ENCODE measurements at regions of chr12 and their contacts with region 1.

Region 1: DNA sequence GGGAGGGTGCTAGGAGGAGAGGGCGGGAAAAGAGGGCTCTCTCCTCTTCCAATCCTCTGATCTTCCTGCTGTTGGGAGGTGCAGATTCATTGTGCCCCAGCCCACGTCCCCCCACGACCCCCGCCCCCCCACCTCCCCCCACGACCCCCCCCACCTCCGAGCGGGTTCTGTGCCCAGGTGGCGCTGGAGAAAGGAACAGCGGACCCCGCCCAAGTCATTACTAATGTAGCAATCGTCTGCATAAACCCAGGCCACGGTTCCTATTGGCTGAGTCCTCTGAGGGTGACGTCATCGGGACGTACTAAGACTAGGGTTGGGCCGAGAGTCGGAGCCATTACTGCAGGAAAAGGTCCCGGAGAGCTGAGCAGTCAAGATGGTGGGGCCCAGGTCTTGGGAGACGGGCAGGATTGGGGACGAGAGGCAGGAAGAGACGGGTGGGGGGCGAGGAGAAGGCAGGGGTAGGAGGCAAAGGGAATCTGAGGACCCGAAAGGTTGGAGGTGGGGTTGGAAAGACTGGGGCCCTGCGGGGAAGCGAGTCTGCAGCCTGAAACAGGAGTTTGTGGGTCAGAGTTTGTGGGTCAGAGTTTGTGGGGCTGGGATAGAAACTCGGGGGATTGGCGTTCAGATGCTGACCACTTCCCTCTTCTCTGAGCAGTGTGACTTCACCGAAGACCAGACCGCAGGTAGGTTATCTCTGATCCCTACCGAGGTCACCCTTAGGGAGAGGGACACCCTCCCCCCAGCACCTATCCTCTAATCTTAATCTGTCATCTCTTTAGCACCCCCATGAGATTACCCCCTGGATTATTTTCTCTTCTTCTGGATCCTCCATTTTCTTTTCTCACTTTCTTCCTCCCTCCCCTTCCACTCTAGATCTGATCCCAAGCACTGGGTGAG is at the start of gene MYL6:
- DNase-seq: peak; percentile 97
- ATAC-seq: peak; percentile 90
- total RNA-seq, gene MYL6: 513 TPM

Region 2: GRCh38 chr12:56117778-56118687 is 40.2 kb before region 1 on chr12 and contains the start of gene ZC3H10:
- intact Hi-C with region 1: loop called (anchors 5 kb)
- DNase-seq: peak; percentile 98
- ATAC-seq: peak; percentile 84
- total RNA-seq, gene ZC3H10: 5.8 TPM

Region 3: DNA sequence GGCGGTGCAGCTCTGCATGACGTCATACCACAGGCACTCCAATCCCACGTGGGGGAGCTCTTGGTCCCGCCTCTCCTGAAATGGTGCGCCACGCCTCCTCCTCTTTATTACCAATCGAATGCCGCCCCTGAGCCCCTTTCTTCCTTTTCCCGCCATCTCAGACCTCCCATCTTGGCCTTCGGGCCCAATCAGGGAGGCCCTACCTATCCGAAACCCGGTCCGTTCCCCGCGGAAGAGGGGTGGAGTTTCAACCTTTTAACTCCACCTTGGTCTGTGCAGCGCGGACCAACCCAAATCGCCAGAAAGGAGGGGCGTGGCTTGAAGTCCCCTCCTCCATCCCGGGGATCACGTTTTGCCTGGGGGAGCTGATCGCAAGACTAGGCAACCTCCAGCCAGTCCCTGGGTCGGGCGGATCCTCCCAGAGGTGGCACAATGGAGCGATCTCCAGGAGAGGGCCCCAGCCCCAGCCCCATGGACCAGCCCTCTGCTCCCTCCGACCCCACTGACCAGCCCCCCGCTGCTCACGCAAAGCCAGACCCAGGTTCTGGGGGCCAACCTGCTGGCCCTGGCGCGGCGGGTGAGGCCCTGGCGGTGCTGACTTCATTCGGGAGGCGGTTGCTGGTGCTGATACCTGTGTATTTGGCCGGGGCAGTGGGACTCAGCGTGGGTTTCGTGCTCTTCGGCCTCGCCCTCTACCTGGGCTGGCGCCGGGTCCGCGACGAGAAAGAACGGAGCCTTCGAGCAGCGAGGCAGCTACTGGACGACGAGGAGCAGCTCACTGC is 30.2 kb before region 1 on chr12 and contains the start of gene ESYT1:
- intact Hi-C with region 1: loop called (anchors 2 kb)
- DNase-seq: peak; percentile 98
- ATAC-seq: peak; percentile 94
- total RNA-seq, gene ESYT1: 27.0 TPM

Measured in Right ventricle myocardium superior (tissue), 1 donor.